ENCODE measurements at regions of chr2 and their contacts with region 1.

Region 1: DNA sequence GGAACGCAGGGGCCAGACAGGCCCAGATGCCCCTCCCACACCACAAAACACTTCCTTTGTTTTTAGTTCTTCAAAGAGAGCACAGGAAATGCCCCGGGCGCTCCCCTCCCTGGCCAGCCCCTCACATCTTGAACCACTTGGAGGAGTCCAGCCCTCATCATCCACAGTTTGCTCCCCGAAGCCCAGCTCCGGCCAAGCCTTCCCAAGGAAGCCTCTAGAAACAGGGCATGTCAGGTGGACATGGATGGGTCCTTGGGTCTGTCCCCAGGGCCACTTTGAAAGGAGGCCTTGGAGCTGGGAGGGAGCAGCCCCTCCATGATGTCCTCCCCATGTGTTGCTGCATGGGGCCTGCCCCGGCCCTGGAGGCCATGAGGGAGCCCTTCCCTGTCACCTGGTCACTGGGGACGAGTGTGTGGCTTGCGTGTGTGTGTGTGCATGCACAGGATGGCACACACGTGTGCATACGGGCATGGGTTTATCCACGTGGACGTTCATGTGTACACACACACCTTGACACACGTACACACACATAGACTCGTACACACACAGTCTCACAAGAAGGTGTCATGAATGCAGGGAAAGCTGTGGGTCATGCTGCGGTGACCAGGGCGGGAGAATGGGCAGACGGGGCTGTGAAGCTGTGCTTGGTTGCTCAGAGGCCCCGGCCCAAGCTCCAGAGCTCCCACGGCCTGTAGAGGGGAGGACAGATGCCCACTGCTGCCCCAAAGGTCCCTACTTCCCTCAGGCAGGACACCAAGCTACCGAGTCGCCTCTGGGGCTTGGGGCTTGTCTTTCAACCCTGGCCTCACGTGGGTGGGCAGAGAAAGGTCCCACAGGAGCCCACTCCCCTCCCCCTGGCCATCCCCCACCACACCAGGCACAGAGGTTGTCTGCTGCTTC is 42.5 kb upstream of the GPC1 start:
- DNase-seq: peak; percentile 6
- H3K4me3 ChIP-seq: no peak overlapping the region
- H3K27ac ChIP-seq: no peak overlapping the region
- H3K4me1 ChIP-seq: no peaks in the 10 kb centered on the region
- H3K27me3 ChIP-seq: no peaks in the 10 kb centered on the region
- CTCF ChIP-seq: no peak
- POLR2A ChIP-seq: no peak

Region 2: GRCh38 chr2:239960929-239961661 is 431.9 kb before region 1 on chr2:
- intact Hi-C with region 1: loop called (anchors 5 kb)
- DNase-seq: no peak
- H3K4me3 ChIP-seq: no peak overlapping the region
- H3K27ac ChIP-seq: no peak overlapping the region
- H3K4me1 ChIP-seq: peaks cover 12% of the 10 kb centered on the region
- H3K27me3 ChIP-seq: no peaks in the 10 kb centered on the region
- CTCF ChIP-seq: no peak
- POLR2A ChIP-seq: no peak

Region 3: DNA sequence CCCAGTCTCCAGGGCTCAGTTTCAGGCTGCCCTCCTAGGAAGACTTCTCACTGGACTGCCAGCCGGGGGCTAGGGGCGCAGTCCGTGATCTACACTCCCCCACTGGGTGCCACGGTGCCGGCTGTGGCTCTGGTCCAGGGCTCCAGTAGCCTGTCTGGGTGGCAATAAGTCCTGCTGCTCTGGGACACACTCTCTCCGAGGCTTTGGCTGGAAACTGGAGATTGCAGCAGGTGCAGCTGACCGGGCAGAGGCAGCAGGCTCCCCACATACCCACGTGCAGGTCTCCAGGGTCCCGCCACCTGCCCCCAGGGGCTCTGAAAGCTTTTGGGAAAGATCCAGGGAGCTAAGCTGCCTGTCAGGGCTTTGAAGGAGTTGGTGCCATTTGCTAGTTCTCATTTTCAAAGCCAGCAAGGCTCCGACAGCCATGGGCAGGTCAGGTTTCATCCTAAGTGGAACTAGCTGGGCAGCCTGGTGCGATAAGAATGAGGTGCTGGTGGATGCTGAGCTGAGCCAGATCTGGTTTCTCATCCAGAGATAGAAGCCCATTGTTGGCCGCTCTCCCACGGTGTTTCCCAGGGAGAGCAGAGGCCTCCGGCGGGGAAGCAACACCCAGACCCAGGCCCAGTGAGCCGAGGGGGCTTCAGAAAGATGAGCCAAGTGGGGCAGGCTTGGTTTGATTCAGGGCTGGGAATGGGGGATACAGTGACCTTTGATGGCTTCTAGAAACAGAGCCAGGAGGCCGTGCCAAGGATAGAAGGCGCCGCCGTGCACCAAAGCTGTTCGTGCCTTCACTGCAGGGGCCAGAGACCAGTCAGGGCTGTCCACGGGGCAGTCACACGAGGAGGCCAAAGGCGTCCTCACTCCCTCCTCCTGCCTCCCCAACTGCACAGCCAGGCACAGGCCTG is 99.2 kb before region 1 on chr2:
- intact Hi-C with region 1: no loop called
- DNase-seq: no peak
- H3K4me3 ChIP-seq: no peak overlapping the region
- H3K27ac ChIP-seq: no peak overlapping the region
- H3K4me1 ChIP-seq: no peaks in the 10 kb centered on the region
- H3K27me3 ChIP-seq: no peaks in the 10 kb centered on the region
- CTCF ChIP-seq: no peak
- POLR2A ChIP-seq: no peak

Region 4: GRCh38 chr2:240325016-240325944 is 67.7 kb before region 1 on chr2:
- intact Hi-C with region 1: no loop called
- DNase-seq: peak; percentile 74
- H3K4me3 ChIP-seq: no peak overlapping the region
- H3K27ac ChIP-seq: no peak overlapping the region
- H3K4me1 ChIP-seq: peaks cover 18% of the 10 kb centered on the region
- H3K27me3 ChIP-seq: no peaks in the 10 kb centered on the region
- CTCF ChIP-seq: no peak
- POLR2A ChIP-seq: no peak

Region 5: DNA sequence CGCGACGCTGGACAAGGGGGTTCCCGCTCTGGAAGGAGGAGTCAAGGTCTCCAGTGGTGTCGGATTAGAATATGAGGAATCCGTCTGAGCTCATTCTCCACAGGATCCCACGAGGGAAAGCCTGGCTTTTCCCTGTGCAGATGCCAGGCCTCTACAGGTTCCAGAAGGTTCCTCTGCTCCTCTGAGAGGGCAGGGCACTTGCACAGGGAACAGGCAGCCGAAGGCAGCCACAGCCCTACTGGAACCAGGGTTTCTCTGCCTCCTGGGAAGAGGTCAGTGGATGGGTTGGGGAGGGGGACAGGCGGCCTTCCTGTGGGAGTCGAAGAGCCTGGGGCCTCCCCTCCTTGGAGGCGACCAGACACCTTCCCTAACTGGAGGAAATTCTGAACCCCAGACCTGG is 297.0 kb after region 1 on chr2:
- intact Hi-C with region 1: no loop called
- DNase-seq: no peak
- H3K4me3 ChIP-seq: no peak overlapping the region
- H3K27ac ChIP-seq: no peak overlapping the region
- H3K4me1 ChIP-seq: no peaks in the 10 kb centered on the region
- H3K27me3 ChIP-seq: no peaks in the 10 kb centered on the region
- CTCF ChIP-seq: no peak
- POLR2A ChIP-seq: no peak